ENCODE measurements at regions of chr6 and their contacts with region 1.

Region 1: GRCh38 chr6:113858480-113859348 is 1.6 kb downstream of the MARCKS start:
- DNase-seq: peak; percentile 83
- H3K4me3 Mint-ChIP-seq: peak overlapping the region; percentile 34
- H3K27ac Mint-ChIP-seq: no peak overlapping the region
- H3K4me1 Mint-ChIP-seq: peaks cover 24% of the 10 kb centered on the region
- H3K27me3 Mint-ChIP-seq: peaks cover 36% of the 10 kb centered on the region

Region 2: GRCh38 chr6:112780498-112781096 is 1078.1 kb before region 1 on chr6:
- CTCF ChIA-PET with region 1: no interaction called
- intact Hi-C with region 1: loop called (anchors 1 kb)
- DNase-seq: peak; percentile 47
- H3K4me3 Mint-ChIP-seq: no peak overlapping the region
- H3K27ac Mint-ChIP-seq: no peak overlapping the region
- H3K4me1 Mint-ChIP-seq: no peaks in the 10 kb centered on the region
- H3K27me3 Mint-ChIP-seq: no peaks in the 10 kb centered on the region

Region 3: DNA sequence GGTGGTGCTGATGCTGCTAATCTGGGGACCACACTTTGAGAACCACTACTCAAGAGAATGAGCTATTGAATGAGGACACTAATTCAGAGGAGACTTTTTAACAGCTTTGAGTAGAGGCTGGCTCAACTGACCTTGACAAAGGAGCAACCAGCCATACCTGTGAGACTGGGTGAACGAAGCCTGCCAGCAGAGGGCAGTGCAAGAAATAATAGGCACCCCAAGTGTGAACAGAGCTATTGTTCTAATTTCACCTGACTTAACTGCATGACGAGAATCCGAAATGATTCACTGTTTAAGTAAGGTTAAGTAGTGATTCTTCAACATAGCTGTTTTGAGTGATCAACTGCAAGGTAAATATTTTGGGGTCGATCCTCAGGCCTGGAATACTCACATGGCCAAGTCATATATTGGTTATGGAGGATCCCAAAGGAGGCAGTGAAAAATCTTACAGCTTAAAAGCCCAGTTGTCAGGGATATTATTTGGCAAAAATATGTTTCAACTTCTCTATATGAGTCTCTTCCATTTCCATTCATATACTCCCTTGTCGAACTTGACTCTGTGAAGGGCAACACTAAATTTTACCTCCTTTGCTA is 552.1 kb before region 1 on chr6:
- CTCF ChIA-PET with region 1: interaction called, 7 read pairs
- intact Hi-C with region 1: loop called (anchors 1 kb)
- DNase-seq: peak; percentile 65
- H3K4me3 Mint-ChIP-seq: no peak overlapping the region
- H3K27ac Mint-ChIP-seq: no peak overlapping the region
- H3K4me1 Mint-ChIP-seq: no peaks in the 10 kb centered on the region
- H3K27me3 Mint-ChIP-seq: no peaks in the 10 kb centered on the region

Region 4: DNA sequence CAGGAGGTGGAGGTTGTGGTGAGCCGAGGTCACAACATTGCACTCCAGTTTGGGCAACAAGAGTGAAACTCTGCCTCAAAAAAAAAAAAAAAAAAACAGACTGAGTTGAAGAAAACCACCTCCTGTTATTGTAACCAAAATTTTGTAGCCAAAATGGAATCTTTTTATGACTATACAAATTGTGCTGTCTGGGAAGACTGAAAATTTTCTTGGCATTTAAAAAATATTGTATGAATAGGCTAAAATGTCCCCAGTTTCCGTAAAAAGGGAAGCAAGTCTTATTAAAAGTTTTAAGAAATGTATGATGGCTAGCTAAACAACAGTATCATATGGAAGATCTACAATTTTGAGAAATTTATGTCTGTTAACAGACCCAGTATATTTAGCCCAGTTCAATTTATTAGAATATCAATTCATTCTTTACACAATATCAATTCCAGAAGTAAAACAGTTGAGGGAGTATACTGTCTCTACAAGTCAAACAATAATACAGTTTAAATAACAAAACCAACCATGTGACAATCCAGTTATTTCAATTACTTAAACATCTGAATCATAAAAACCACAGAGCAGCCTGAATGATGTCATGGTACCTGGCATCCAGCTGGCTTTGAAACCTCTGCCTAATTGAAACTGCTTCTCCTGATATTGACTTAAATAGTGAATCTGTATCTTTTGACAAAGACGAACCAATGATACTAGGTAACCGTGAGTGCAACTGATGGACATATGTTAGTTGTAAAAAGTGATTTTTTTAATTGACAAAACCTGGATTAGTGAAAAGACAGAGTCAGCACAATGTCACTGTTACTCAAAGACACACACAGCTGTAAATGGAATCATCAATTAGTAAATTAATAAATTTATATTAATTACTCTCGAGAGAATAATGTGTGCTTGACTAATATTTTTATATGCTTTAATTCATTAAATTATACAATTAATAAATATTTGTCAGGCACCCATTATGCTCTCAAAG is 168.1 kb before region 1 on chr6:
- CTCF ChIA-PET with region 1: interaction called, 4 read pairs
- intact Hi-C with region 1: loop called (anchors 1 kb)
- DNase-seq: peak; percentile 24
- H3K4me3 Mint-ChIP-seq: no peak overlapping the region
- H3K27ac Mint-ChIP-seq: no peak overlapping the region
- H3K4me1 Mint-ChIP-seq: peaks cover 3% of the 10 kb centered on the region
- H3K27me3 Mint-ChIP-seq: no peaks in the 10 kb centered on the region

Region 5: GRCh38 chr6:113936093-113936934 is 77.6 kb after region 1 on chr6:
- CTCF ChIA-PET with region 1: no interaction called
- intact Hi-C with region 1: no loop called
- DNase-seq: peak; percentile 10
- H3K4me3 Mint-ChIP-seq: no peak overlapping the region
- H3K27ac Mint-ChIP-seq: no peak overlapping the region
- H3K4me1 Mint-ChIP-seq: no peaks in the 10 kb centered on the region
- H3K27me3 Mint-ChIP-seq: no peaks in the 10 kb centered on the region

Measured in activated naive CD4-positive, alpha-beta T cell treated with anti-CD3 and anti-CD28 coated beads for 36 hours (primary cell).